ENCODE measurements at regions of chr16 and their contacts with region 1.

Region 1: DNA sequence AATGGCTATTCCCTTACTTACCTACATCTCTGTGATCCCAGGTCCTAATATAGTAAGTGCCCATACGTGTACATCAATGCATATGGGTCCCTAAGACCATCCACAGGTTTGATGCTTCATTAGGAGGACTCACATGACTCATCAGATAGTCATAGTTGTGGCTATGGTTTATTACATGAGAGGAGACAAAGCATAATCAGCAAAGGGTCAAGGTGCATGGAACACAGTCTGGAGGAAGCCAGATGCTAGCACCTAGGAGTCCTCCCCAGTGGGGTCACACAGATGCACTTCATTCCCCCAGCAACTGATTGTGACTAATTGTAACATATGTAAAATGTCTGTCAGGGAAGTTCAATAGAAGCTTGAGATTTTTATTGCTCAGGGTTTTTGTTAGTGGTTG is 42.8 kb downstream of the PHKB start:
- DNase-seq: no peak
- H3K4me3 ChIP-seq: no peak overlapping the region
- H3K27ac ChIP-seq: no peak overlapping the region
- H3K4me1 ChIP-seq: peaks cover 12% of the 10 kb centered on the region
- CTCF ChIP-seq: no peak

Region 2: GRCh38 chr16:47523342-47524006 is 19.5 kb after region 1 on chr16:
- CTCF ChIA-PET with region 1: no interaction called
- POLR2A ChIA-PET with region 1: interaction called, 10 read pairs
- intact Hi-C with region 1: no loop called
- DNase-seq: peak; percentile 77
- H3K4me3 ChIP-seq: no peak overlapping the region
- H3K27ac ChIP-seq: no peak overlapping the region
- H3K4me1 ChIP-seq: peaks cover 14% of the 10 kb centered on the region
- CTCF ChIP-seq: no peak

Measured in OCI-LY7 (cell line).